CD8-positive, alpha-beta memory T cell (primary cell): ENCODE measurements at regions of chr7 and their contacts with region 1.

Region 1: GRCh38 chr7:56074371-56074791 is 10.3 kb downstream of the SUMF2 start:
- DNase-seq: peak; percentile 44 to 72 (median 52)
- H3K4me3 ChIP-seq: no peak overlapping the region
- H3K4me3 Mint-ChIP-seq: peak overlapping the region in 1 of 7 donors; percentile 3
- H3K27ac ChIP-seq: no peak overlapping the region
- H3K27ac Mint-ChIP-seq: peak overlapping the region in 3 of 8 donors; percentile 28 to 29 (median 29)
- H3K4me1 ChIP-seq: no peaks in the 10 kb centered on the region
- H3K4me1 Mint-ChIP-seq: peaks cover 5 to 8% (median 8%) of the 10 kb centered on the region in 3 donors
- H3K27me3 ChIP-seq: no peaks in the 10 kb centered on the region
- H3K27me3 Mint-ChIP-seq: no peaks in the 10 kb centered on the region

Region 2: DNA sequence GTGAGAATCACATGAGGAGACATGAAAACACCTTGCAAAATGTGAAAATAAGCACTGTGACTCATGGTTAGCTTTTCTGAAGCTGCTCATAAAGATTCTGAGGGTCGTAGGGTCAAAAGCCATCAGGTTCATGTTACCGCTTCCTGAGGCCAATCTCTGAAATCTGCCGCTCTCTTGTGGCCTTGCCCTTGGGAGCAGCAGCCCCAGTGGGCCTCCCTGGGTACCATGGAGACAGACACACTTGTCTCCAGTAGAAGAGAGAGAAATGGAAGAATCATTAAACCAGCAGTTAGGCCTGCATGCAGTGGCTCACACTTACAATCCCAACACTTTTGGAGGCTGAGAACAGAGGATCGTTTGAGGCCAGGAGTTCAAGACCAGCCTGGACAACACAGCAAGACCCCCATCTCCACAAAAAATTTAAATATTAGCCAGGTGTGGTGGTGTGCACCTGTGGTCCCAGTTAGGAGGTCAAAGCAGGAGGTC is 67.2 kb before region 1 on chr7:
- CTCF ChIA-PET with region 1: interaction called, 113 read pairs
- POLR2A ChIA-PET with region 1: no interaction called
- DNase-seq: no peak
- H3K4me3 ChIP-seq: no peak overlapping the region
- H3K4me3 Mint-ChIP-seq: no peak overlapping the region
- H3K27ac ChIP-seq: no peak overlapping the region
- H3K27ac Mint-ChIP-seq: peak overlapping the region in 1 of 8 donors; percentile 41
- H3K4me1 ChIP-seq: no peaks in the 10 kb centered on the region
- H3K4me1 Mint-ChIP-seq: no peaks in the 10 kb centered on the region
- H3K27me3 ChIP-seq: no peaks in the 10 kb centered on the region
- H3K27me3 Mint-ChIP-seq: no peaks in the 10 kb centered on the region

Region 3: DNA sequence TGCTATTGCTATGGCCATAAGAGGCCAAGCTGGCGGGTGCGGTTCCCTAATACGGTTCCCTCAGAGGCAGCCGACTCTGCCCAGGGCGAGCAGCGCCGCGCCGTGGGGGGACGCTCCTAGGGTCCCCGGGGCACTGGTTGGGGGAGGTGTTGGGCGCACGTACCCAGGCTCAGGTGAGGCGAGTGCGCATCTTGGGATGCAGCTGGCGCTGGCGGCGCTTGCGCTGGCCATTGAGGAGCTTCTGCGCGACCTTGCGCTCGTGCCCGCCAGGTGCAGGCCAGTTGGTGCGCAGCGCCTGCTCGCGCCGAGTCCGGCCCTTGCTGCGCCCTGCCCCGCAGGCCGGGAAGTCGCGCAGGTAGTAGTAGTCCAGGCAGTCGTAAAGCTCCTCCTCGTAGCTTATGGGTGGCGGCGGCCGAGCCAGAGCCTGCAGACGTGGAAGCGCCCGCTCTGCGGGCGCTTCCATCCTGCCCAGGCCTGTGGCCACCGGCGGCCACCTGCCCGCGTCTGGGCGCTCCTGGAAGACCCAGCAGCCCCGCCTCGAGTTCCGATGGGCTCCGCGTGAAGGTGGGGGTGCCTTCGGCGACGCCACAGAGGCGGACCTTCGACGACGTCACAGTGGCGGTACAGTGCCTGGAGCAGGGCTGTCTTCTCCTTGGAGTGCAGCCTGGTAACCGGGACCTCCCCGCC is 41.6 kb after region 1 on chr7 and contains the start of gene NUPR2:
- CTCF ChIA-PET with region 1: no interaction called
- POLR2A ChIA-PET with region 1: no interaction called
- DNase-seq: no peak
- H3K4me3 ChIP-seq: no peak within 1 kb of the TSS
- H3K4me3 Mint-ChIP-seq: no peak within 1 kb of the TSS
- H3K27ac ChIP-seq: no peak within 1 kb of the TSS
- H3K27ac Mint-ChIP-seq: no peak within 1 kb of the TSS
- H3K4me1 ChIP-seq: no peaks in the 10 kb centered on the region
- H3K4me1 Mint-ChIP-seq: no peaks in the 10 kb centered on the region
- H3K27me3 ChIP-seq: no peaks in the 10 kb centered on the region
- H3K27me3 Mint-ChIP-seq: peaks cover 10 to 35% of the 10 kb centered on the region in 2 donors
- total RNA-seq, gene NUPR2: not detected